ENCODE measurements at regions of chr16 and their contacts with region 1.

Region 1: GRCh38 chr16:3264137-3265036 is 8.0 kb upstream of the MEFV start:
- DNase-seq: peak; percentile 98
- H3K4me3 Mint-ChIP-seq: peak overlapping the region; percentile 85
- H3K27ac Mint-ChIP-seq: peak overlapping the region; percentile 88
- H3K4me1 Mint-ChIP-seq: peaks cover 30% of the 10 kb centered on the region
- H3K27me3 Mint-ChIP-seq: no peaks in the 10 kb centered on the region

Region 2: DNA sequence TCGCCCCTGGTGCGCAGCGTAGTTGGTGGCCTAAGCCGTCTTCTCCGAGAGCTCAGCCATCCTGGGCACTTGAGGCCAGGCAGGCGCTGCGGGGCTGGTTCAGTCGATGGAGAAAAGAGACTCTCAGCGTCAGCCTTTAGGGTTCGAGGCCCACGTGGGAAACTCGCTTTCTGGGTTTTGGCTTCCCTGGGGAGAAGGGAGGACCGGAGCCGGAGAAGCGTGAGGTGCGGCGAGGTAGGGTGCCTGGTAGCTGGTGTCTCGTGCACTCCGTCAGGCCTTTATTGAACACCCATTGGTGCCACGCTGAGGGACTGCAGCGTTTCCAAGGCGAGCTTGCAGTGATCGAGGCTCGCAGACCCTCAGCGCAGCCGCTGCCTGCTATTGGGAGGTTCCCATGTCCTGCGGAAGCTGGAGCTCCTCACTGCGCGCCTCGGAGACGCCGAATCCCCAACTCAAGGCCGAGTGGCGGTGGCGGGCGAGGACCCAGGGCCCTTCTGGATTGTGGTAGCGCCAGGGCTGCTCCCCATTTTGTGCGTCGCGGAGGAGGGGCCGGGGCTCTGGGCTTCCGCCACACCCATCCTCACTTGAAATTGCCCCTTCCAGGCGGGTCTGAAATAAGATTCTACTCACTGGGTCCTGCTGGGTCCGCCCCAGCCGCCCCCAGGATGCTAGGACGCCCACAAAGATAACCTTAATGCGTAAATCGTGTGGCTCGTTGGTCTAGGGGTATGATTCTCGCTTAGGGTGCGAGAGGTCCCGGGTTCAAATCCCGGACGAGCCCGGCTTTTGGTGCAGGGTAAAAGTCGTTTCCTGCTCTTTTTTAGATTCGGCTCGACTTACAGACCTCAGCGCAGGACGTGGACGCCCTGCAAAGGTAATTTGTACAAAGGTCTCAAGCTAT is 75.2 kb before region 1 on chr16:
- CTCF ChIA-PET with region 1: no interaction called
- intact Hi-C with region 1: loop called (anchors 1 kb)
- DNase-seq: peak; percentile 76
- H3K4me3 Mint-ChIP-seq: peak overlapping the region; percentile 79
- H3K27ac Mint-ChIP-seq: peak overlapping the region; percentile 84
- H3K4me1 Mint-ChIP-seq: peaks cover 46% of the 10 kb centered on the region
- H3K27me3 Mint-ChIP-seq: peaks cover 73% of the 10 kb centered on the region

Region 3: DNA sequence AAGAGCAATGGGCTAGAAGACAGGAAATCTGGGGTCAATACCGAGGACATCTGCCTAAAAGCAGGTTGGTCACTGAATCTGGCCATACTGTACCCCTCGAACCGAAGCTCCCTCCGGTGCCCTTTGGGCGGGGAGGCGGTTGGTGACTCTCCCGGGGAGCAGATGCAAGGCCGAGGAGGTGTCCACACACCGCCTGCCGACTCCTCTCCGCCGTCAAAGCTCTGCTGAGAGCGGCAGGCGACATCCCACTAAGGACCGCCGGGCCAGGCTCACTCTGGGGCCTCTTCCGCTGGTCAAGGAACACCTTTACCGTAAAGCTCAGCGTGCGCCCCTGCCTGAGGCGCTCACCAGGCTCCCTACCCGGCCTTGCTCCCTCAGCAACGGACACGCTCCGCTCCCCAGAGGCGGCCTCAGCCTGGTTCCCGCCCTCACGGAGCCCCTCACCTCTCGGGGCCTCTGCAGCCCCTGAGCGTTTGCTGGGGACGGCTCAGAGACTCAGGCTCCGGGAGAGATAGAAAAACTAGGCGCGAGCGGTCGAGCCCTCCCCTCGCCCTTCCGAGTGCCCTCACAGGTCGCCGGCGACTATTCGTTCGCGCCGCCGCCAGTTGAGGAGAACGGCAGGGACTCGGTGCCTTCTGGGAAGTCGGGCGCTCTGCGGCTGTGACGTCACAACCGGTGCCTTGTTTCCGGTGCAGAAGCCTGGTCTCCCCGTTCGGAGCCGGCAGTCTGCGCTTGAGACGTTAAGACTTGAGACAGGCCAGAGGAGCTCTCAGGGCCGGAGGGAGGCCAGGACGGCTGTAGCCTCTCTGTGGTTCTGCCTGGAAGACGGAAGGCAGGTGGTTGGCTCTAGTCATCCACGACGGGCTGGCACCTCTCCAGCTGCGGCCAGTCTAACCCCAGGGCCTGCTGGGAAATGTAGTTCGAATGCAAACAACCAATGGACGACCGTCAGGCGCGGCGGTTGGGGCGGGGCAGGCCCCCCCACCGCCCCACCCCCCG is 29.5 kb before region 1 on chr16 and contains the start of gene ZNF200:
- CTCF ChIA-PET with region 1: no interaction called
- intact Hi-C with region 1: loop called (anchors 1 kb)
- DNase-seq: peak; percentile 98
- H3K4me3 Mint-ChIP-seq: peak within 1 kb of the TSS; percentile 83
- H3K27ac Mint-ChIP-seq: peak within 1 kb of the TSS; percentile 90
- H3K4me1 Mint-ChIP-seq: peaks cover 28% of the 10 kb centered on the region
- H3K27me3 Mint-ChIP-seq: no peaks in the 10 kb centered on the region
- total RNA-seq, gene ZNF200: 9.7 to 10.1 TPM

Region 4: GRCh38 chr16:3364774-3365427 is 100.5 kb after region 1 on chr16:
- CTCF ChIA-PET with region 1: no interaction called
- intact Hi-C with region 1: loop called (anchors 1 kb)
- DNase-seq: peak; percentile 91
- H3K4me3 Mint-ChIP-seq: peak overlapping the region; percentile 78
- H3K27ac Mint-ChIP-seq: peak overlapping the region; percentile 79
- H3K4me1 Mint-ChIP-seq: peaks cover 10% of the 10 kb centered on the region
- H3K27me3 Mint-ChIP-seq: peaks cover 3% of the 10 kb centered on the region

Region 5: GRCh38 chr16:3457434-3458252 is 193.3 kb after region 1 on chr16:
- CTCF ChIA-PET with region 1: no interaction called
- intact Hi-C with region 1: loop called (anchors 1 kb)
- DNase-seq: peak; percentile 91
- H3K4me3 Mint-ChIP-seq: peak overlapping the region; percentile 79
- H3K27ac Mint-ChIP-seq: peak overlapping the region; percentile 88
- H3K4me1 Mint-ChIP-seq: peaks cover 44% of the 10 kb centered on the region
- H3K27me3 Mint-ChIP-seq: no peaks in the 10 kb centered on the region